Caco-2 (cell line): ENCODE measurements at regions of chr14 and their contacts with region 1.

Region 1: DNA sequence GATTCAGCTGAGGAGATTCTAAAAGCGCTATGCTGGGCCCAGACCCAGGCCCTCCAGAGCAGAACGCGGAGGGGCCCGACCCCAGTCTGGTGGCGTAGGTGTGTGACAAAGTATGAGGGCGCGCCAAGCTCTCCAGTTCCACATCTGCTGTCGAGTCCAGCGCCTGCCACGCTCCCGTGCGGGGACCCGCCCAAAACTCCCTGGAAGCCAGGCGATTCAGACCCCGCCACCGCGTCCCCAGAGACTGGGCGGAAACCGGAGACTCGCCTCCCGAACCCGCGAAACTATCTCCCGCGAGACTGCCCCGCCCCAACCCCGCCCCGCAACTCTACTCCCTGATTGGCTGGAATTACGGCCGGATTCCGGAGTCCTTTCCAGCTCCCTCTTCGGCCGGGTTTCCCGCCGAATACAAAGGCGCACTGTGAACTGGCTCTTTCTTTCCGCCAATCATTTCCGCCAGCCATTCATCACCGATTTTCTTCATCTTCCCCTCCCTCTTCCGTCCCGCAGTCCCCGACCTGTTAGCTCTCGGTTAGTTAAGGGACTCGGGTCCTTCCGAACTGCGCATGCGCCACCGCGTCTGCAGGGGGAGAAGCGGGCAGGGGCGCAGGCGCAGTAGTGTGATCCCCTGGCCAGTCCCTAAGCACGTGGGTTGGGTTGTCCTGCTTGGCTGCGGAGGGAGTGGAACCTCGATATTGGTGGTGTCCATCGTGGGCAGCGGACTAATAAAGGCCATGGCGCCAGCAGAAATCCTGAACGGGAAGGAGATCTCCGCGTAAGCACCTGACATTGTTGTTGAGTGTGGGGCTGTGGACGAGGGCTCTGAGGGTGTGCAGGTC is at the start of gene MTHFD1:
- DNase-seq: peak; percentile 98 to 99
- H3K4me3 ChIP-seq: peak within 1 kb of the TSS; percentile 53
- H3K4me3 Mint-ChIP-seq: peak within 1 kb of the TSS; percentile 93
- H3K27ac Mint-ChIP-seq: peak within 1 kb of the TSS; percentile 87
- H3K4me1 ChIP-seq: peaks cover 3% of the 10 kb centered on the region; the same call in 1 of the 2 replicates
- H3K4me1 Mint-ChIP-seq: peaks cover 13% of the 10 kb centered on the region
- H3K27me3 ChIP-seq: no peaks in the 10 kb centered on the region
- H3K27me3 Mint-ChIP-seq: no peaks in the 10 kb centered on the region
- CTCF ChIP-seq: no peak
- total RNA-seq, gene MTHFD1: 180 and 203 TPM in 2 replicates

Region 2: DNA sequence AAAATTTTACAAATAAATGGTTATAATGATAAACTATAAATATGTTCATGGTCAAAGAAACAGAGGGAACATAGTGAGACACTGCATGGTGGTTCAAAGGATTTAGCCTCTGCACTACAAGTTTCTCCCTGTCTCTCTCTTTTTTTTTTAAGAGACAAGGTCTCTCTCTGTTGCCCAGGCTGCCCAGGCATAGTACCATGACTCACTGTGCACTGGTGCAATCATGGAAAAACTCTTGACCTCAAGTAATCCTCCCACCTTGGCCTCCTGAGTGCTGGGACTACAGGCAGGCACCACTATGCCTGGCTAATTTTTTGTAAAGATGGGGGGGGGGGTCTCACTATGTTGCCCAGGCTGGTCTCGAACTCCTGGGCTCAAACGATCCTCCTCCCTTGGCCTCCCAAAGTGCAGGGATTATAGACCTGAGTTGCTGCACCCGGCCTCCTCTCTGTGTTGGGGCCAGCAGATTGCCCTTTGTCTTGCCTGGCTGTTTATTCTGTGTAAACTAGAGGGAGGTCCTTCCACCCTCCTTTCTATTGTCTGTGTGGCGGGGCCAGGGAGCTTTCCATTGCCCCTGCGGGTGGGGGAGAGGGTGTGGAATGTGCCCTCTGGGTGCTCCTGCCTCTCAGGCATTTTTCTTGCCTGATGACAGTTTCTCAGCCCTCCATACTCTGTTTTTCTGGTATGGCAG is 22.3 kb after region 1 on chr14:
- CTCF ChIA-PET with region 1: no interaction called
- POLR2A ChIA-PET with region 1: interaction called, 6 read pairs
- intact Hi-C with region 1: loop called (anchors 1 kb)
- DNase-seq: peak; percentile 81 to 84
- H3K4me3 ChIP-seq: no peak overlapping the region
- H3K4me3 Mint-ChIP-seq: no peak overlapping the region
- H3K27ac Mint-ChIP-seq: peak overlapping the region; percentile 78
- H3K4me1 ChIP-seq: peaks cover 20% of the 10 kb centered on the region; the same call in 1 of the 2 replicates
- H3K4me1 Mint-ChIP-seq: peaks cover 12% of the 10 kb centered on the region
- H3K27me3 ChIP-seq: no peaks in the 10 kb centered on the region
- H3K27me3 Mint-ChIP-seq: no peaks in the 10 kb centered on the region
- CTCF ChIP-seq: no peak

Region 3: GRCh38 chr14:64438181-64438841 is 50.4 kb after region 1 on chr14:
- CTCF ChIA-PET with region 1: interaction called, 4 read pairs
- POLR2A ChIA-PET with region 1: interaction called, 7 read pairs
- intact Hi-C with region 1: loop called (anchors 1 kb)
- DNase-seq: peak; percentile 74 to 77
- H3K4me3 ChIP-seq: no peak overlapping the region
- H3K4me3 Mint-ChIP-seq: peak overlapping the region; percentile 58
- H3K27ac Mint-ChIP-seq: peak overlapping the region; percentile 84
- H3K4me1 ChIP-seq: peaks cover 53% of the 10 kb centered on the region
- H3K4me1 Mint-ChIP-seq: peaks cover 15% of the 10 kb centered on the region
- H3K27me3 ChIP-seq: no peaks in the 10 kb centered on the region
- H3K27me3 Mint-ChIP-seq: no peaks in the 10 kb centered on the region
- CTCF ChIP-seq: no peak